ENCODE measurements at regions of chr17 and their contacts with region 1.

Region 1: GRCh38 chr17:28644985-28645939 is at the start of gene BLTP2:
- DNase-seq: peak; percentile 97
- ATAC-seq: peak; percentile 97 to 99 (median 98)
- H3K4me3 ChIP-seq: peak within 1 kb of the TSS; percentile 68 to 97 (median 94)
- H3K27ac ChIP-seq: peak within 1 kb of the TSS; percentile 87 to 98 (median 94)
- H3K4me1 ChIP-seq: peaks cover 15 to 60% (median 46%) of the 10 kb centered on the region in 9 donors
- H3K27me3 ChIP-seq: no peaks in the 10 kb centered on the region
- CTCF ChIP-seq: no peak
- total RNA-seq, gene BLTP2: 61.6 to 110 (median 69.0) TPM

Region 2: DNA sequence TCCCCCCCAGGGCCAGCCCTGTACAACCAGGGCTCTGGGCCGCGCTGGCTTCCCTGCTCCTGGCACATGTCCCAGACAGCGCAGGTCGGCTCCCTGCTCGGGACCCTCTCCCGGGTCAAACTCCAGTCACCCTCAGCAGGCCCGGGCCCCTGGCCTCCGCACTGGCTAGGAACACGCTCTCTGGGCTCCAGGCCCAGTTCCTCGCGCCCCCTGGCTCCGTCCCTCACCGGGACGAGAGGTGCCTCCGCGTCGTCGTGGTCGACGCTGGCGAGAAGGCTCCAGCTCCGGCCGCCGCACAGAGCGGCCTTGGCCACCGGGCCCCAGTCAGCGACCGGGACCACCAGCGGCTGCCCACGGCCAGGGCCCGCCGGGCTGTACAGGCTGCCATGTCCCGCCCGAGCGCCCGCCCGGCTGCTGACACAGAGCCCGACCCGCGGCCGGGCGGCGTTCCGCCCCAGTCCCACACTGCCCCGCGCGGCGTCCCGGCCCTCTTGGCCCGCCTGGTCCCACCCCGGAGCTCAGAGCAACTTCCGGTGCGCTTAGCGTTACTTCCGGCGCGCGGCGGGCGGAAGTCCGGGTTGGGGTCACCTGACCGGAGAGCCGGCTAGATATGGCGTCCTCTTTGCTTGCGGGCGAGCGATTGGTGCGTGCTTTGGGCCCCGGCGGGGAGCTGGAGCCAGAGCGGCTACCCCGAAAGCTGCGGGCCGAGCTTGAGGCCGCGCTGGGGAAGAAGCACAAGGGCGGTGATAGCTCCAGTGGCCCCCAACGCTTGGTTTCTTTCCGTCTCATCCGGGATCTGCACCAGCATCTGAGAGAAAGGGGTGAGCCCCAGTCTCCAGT is 288.0 kb before region 1 on chr17 and contains the start of gene POLDIP2:
- intact Hi-C with region 1: no loop called
- DNase-seq: peak; percentile 95 to 96
- ATAC-seq: peak; percentile 99 to 100 (median 100)
- H3K4me3 ChIP-seq: peak within 1 kb of the TSS; percentile 67 to 100 (median 95)
- H3K27ac ChIP-seq: peak within 1 kb of the TSS; percentile 60 to 98 (median 95)
- H3K4me1 ChIP-seq: peaks cover 7 to 30% (median 27%) of the 10 kb centered on the region in 9 donors
- H3K27me3 ChIP-seq: no peaks in the 10 kb centered on the region
- CTCF ChIP-seq: peak in 4 of 9 donors; percentile 14 to 35 (median 31)
- total RNA-seq, gene POLDIP2: 144 to 176 (median 160) TPM

Region 3: DNA sequence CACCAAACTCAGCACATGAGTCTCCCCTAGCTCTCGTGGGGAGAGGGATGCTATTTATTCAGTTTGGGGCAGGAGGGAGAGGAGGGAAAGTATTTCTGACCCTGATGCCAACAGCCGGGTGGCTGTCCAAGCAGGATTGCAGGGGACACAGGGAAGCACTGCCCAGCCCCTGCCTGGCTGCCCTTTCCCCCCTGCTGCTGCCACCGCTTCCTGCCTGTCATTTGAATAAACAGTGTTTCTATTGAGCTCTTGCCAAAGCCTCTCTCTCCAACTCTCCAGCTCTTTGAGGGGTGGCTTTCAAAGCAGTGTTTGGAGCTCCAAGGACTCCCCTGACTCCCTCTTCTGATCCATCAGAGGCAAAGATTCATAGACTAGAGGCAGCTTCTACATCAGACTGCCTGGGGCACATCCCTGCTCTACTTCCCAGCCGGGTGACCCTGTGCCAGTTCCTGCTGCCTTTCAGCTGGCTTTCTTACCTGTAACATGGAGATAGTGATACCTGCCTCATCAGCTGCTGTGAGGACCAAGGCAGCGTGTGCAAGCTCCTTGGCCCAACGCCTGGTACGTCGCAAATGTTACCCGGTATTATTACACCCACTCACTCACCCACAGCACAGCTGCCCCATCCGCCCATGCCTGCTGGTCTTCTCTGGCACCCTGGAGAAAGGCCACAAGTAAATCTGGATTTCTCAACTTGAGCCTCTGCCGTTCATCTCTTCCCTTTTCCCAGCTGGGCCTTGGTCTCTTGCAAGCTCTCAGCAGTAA is 56.9 kb after region 1 on chr17:
- intact Hi-C with region 1: loop called in 1 of 10 experiments (anchors 5 kb)
- DNase-seq: no peak
- ATAC-seq: no peak
- H3K4me3 ChIP-seq: no peak overlapping the region
- H3K27ac ChIP-seq: no peak overlapping the region
- H3K4me1 ChIP-seq: no peaks in the 10 kb centered on the region
- H3K27me3 ChIP-seq: no peaks in the 10 kb centered on the region
- CTCF ChIP-seq: no peak

Region 4: DNA sequence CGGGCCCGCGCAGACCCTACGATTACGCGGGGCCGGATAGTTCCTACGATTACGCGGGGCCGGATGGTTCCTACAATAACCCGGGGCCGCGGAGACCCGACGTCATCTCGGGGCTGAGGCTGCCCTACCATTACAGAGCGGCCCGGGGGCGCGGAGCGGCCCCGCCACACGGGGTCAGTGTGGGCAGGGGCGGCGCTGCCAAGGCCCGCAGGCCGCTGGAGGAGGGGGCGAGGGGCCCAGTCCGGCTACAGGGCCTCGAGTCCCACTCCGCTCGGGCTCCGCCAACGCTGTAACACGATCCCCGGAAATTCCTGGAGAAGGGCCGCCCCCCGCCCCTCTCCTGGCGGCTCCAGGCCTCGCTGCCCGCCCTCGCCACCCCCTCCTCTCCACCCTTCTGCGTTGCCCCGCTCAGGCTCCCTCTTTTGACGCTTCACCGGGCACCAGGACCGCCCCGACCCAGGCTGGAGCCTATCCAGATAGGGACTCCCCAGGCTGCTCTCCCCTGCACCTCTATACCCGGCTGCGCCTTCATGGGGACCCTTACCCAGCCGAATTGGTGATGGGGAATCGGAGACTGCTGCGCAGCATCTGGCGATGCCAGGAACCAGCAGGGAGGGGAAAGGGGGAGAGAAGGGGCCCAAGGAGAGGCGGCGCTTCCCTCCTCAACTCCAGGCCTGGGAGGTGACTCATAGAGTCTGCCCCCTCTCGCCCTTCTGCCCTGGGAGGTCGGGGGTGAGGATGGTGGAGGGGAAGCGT is 72.5 kb after region 1 on chr17 and contains the start of gene RAB34:
- intact Hi-C with region 1: loop called in 1 of 10 experiments (anchors 5 kb)
- DNase-seq: peak; percentile 72 to 74
- ATAC-seq: peak; percentile 15 to 46 (median 30)
- H3K4me3 ChIP-seq: peak within 1 kb of the TSS; percentile 51 to 78 (median 65)
- H3K27ac ChIP-seq: peak within 1 kb of the TSS; percentile 61 to 95 (median 90)
- H3K4me1 ChIP-seq: peaks cover 17 to 62% (median 51%) of the 10 kb centered on the region in 9 donors
- H3K27me3 ChIP-seq: peaks cover 0 to 13% (median 7%) of the 10 kb centered on the region in 7 donors
- CTCF ChIP-seq: peak in 7 of 9 donors; percentile 25 to 58 (median 41)
- total RNA-seq, gene RAB34: 7.0 to 25.0 (median 10.4) TPM

Region 5: GRCh38 chr17:29613352-29613837 is 968.1 kb after region 1 on chr17:
- intact Hi-C with region 1: no loop called
- DNase-seq: peak; percentile 95 to 98
- ATAC-seq: peak; percentile 71 to 86 (median 81)
- H3K4me3 ChIP-seq: peak overlapping the region; percentile 10 to 53 (median 44)
- H3K27ac ChIP-seq: peak overlapping the region in 9 of 10 donors; percentile 11 to 56 (median 33)
- H3K4me1 ChIP-seq: peaks cover 14 to 58% (median 46%) of the 10 kb centered on the region in 9 donors
- H3K27me3 ChIP-seq: peaks cover 0 to 33% (median 0%) of the 10 kb centered on the region in 7 donors
- CTCF ChIP-seq: peak; percentile 86 to 99 (median 94)

Measured in heart right ventricle (tissue), 16 donors.